ENCODE measurements at regions of chr2 and their contacts with region 1.

Region 1: DNA sequence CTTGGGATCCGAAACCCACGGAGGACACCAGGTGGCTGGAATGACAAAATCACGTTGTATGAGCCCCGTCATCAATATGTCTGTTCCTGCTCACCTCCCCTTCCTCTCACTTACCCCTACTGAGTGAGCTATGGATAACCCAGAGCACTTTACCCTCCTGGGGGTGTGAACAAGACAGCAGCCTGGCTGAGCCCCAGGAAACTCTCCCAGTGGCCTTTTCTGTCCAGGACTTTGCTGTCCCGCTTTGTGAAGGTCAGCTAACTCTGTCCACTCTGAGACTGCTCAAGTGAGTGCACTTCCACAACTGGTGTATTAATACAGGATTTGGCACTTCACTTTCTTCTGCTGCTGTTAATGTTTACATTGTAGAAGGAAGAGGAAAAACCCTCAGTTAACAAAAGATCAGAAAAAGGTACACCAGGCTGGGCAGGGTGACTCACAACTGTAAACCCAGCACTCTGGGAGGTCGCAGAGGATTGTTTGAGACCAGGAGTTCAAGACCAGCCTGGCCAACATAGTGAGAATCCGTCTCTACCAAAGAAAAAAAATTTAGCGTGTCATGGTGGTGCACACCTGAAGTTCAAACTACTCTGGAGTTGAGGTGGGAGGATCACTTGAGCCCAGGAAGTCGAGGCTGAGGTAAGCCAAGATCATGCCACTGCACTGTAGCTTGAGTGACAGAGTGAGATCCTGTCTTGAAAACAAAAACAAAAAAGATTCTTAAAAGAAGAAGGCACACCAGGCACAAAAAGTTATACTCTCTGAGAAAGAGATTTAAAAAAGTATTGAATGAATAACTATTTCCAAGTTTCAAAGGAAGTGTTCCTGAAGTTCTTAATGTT is 90.3 kb downstream of the CLHC1 start:
- DNase-seq: no peak
- H3K4me3 ChIP-seq: no peak overlapping the region
- H3K27ac ChIP-seq: peak overlapping the region in 57 of 59 donors; percentile 2 to 99 (median 97)
- H3K27me3 ChIP-seq: no peaks in the 10 kb centered on the region
- CTCF ChIP-seq: no peak

Region 2: GRCh38 chr2:55163274-55163721 is 21.5 kb after region 1 on chr2:
- intact Hi-C with region 1: loop called (anchors 2 kb)
- DNase-seq: no peak
- H3K4me3 ChIP-seq: peak overlapping the region in 21 of 59 donors; percentile 1 to 42 (median 21)
- H3K27ac ChIP-seq: peak overlapping the region; percentile 78 to 98 (median 93)
- H3K27me3 ChIP-seq: no peaks in the 10 kb centered on the region
- CTCF ChIP-seq: no peak

Region 3: GRCh38 chr2:55223958-55224760 is 82.4 kb after region 1 on chr2:
- intact Hi-C with region 1: no loop called
- DNase-seq: peak in 1 of 10 donors; percentile 7
- H3K4me3 ChIP-seq: peak overlapping the region; percentile 58 to 89 (median 75)
- H3K27ac ChIP-seq: peak overlapping the region in 53 of 59 donors; percentile 38 to 94 (median 85)
- H3K27me3 ChIP-seq: no peaks in the 10 kb centered on the region
- CTCF ChIP-seq: no peak